ENCODE measurements at regions of chr16 and their contacts with region 1.

Region 1: DNA sequence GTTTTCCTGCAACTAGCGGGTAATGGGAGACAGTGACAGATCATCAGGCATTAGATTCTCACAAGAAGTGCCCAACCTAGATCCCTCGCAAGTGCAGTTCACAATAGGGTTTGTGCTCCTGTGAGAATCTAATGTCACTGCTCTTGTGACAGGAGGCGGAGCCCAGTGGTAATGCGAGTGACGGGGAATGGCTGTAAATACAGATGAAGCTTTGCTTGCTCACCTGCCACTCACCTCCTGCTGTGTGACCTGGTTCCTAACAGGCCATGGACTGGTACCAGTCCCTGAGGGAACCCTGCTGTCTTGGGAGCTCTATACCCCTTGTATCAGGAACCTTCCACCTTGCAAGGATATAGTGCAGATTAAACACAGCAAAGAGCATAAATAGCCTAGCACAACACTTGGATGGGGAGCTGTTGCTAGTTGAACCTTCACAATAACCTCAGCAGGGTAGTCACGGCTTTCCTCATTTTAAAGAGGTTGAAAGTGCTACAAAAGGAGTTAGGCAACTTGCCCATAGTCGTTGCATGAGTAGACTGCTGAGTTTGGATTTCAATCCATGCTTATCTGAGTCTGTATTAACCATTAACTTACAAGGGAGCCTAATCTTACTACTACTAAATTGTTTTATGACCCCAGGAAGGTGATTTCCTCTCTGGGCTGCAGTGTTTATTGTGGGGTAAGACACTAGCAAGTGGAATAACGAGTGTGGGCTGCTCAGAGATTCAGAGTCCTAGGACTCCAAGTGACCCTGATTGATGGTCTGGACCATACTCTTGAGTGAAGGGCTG is 156.6 kb upstream of the ZFHX3 start:
- DNase-seq: peak; percentile 68
- H3K4me3 ChIP-seq: no peak overlapping the region
- H3K27ac ChIP-seq: peak overlapping the region; percentile 60
- H3K4me1 ChIP-seq: peaks cover 3% of the 10 kb centered on the region
- H3K27me3 ChIP-seq: no peaks in the 10 kb centered on the region
- CTCF ChIP-seq: no peak

Region 2: GRCh38 chr16:73254983-73255382 is 50.4 kb after region 1 on chr16:
- intact Hi-C with region 1: loop called (anchors 5 kb)
- DNase-seq: peak; percentile 54
- H3K4me3 ChIP-seq: no peak overlapping the region
- H3K27ac ChIP-seq: no peak overlapping the region
- H3K4me1 ChIP-seq: no peaks in the 10 kb centered on the region
- H3K27me3 ChIP-seq: no peaks in the 10 kb centered on the region
- CTCF ChIP-seq: no peak